ENCODE measurements at regions of chr5 and their contacts with region 1.

Region 1: DNA sequence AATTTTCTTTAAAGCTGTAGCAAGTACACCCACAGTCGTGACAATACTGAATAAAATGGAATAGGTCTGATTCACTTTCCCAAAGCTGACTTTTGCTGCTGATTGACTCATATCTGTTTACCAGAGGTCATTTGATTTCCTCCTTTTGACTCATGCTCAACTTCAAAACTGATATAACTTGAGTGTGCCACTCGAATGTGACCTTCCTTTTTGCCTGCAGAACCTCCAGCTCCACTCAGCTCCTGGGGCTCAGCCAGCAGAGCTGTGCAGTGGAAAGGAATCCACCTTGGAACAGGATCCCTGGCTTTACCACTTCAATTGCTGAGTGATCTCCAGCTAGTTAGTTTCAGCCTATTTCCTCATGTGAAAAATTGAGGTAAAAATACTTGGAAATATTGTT is 84.1 kb downstream of the FEM1C start:
- DNase-seq: peak; percentile 25
- H3K4me3 Mint-ChIP-seq: no peak overlapping the region
- H3K27ac Mint-ChIP-seq: no peak overlapping the region
- H3K4me1 Mint-ChIP-seq: peaks cover 15% of the 10 kb centered on the region
- H3K27me3 Mint-ChIP-seq: peaks cover 17% of the 10 kb centered on the region

Region 2: GRCh38 chr5:115231598-115231997 is 228.9 kb before region 1 on chr5:
- CTCF ChIA-PET with region 1: no interaction called
- POLR2A ChIA-PET with region 1: no interaction called
- intact Hi-C with region 1: no loop called
- DNase-seq: no peak
- H3K4me3 Mint-ChIP-seq: no peak overlapping the region
- H3K27ac Mint-ChIP-seq: no peak overlapping the region
- H3K4me1 Mint-ChIP-seq: no peaks in the 10 kb centered on the region
- H3K27me3 Mint-ChIP-seq: no peaks in the 10 kb centered on the region

Region 3: GRCh38 chr5:115487756-115488155 is 27.3 kb after region 1 on chr5:
- CTCF ChIA-PET with region 1: interaction called, 4 read pairs
- POLR2A ChIA-PET with region 1: interaction called, 3 read pairs
- intact Hi-C with region 1: loop called (anchors 1 kb)
- DNase-seq: peak; percentile 34
- H3K4me3 Mint-ChIP-seq: no peak overlapping the region
- H3K27ac Mint-ChIP-seq: no peak overlapping the region
- H3K4me1 Mint-ChIP-seq: peaks cover 11% of the 10 kb centered on the region
- H3K27me3 Mint-ChIP-seq: peaks cover 7% of the 10 kb centered on the region